Mammary epithelial cell (primary cell): ENCODE measurements at regions of chr16 and their contacts with region 1.

Region 1: GRCh38 chr16:11328172-11329070 is 16.8 kb upstream of the RMI2 start:
- DNase-seq: peak; percentile 74
- H3K4me3 ChIP-seq: no peak overlapping the region
- H3K27ac ChIP-seq: no peak overlapping the region
- H3K4me1 ChIP-seq: peaks cover 11% of the 10 kb centered on the region
- H3K27me3 ChIP-seq: no peaks in the 10 kb centered on the region
- CTCF ChIP-seq: no peak

Region 2: GRCh38 chr16:11296706-11297491 is 31.5 kb before region 1 on chr16:
- CTCF ChIA-PET with region 1: no interaction called
- dilution Hi-C with region 1: no loop called
- in situ Hi-C with region 1: no loop called
- intact Hi-C with region 1: no loop called
- DNase-seq: peak; percentile 50
- H3K4me3 ChIP-seq: no peak overlapping the region
- H3K27ac ChIP-seq: no peak overlapping the region
- H3K4me1 ChIP-seq: peaks cover 13% of the 10 kb centered on the region
- H3K27me3 ChIP-seq: no peaks in the 10 kb centered on the region
- CTCF ChIP-seq: no peak

Region 3: GRCh38 chr16:11345040-11345862 is 16.8 kb after region 1 on chr16 and contains the start of gene RMI2:
- CTCF ChIA-PET with region 1: no interaction called
- dilution Hi-C with region 1: no loop called
- in situ Hi-C with region 1: no loop called
- intact Hi-C with region 1: loop called (anchors 1 kb)
- DNase-seq: peak; percentile 93
- H3K4me3 ChIP-seq: peak within 1 kb of the TSS; percentile 63 to 73 (median 67)
- H3K27ac ChIP-seq: peak within 1 kb of the TSS; percentile 33
- H3K4me1 ChIP-seq: peaks cover 8% of the 10 kb centered on the region
- H3K27me3 ChIP-seq: no peaks in the 10 kb centered on the region
- CTCF ChIP-seq: no peak
- total RNA-seq, gene RMI2: 2.2 to 14.7 TPM

Region 4: GRCh38 chr16:11759163-11759834 is 430.9 kb after region 1 on chr16:
- CTCF ChIA-PET with region 1: no interaction called
- dilution Hi-C with region 1: no loop called
- in situ Hi-C with region 1: no loop called
- intact Hi-C with region 1: no loop called
- DNase-seq: no peak
- H3K4me3 ChIP-seq: no peak overlapping the region
- H3K27ac ChIP-seq: no peak overlapping the region
- H3K4me1 ChIP-seq: peaks cover 4% of the 10 kb centered on the region
- H3K27me3 ChIP-seq: no peaks in the 10 kb centered on the region
- CTCF ChIP-seq: no peak

Region 5: DNA sequence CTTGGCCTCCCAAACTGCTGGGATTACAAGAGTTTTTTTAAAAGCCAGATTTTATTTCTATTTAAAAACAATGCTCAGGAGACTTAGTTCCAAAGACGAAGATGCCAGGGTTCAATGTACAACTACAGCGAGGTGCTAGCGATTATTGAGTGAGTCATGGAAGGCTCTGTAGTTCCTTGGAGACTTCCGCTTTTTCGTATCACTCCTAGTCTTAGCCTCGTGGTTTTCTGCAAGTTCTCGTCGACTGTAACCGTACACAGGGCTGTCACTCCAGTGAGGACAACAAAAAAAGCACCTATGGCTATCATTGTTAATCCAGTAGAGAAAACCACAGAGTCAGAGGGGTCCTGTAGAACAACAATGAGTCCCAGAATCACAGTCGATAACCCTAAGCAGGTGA is 491.4 kb after region 1 on chr16:
- CTCF ChIA-PET with region 1: interaction called, 12 read pairs
- dilution Hi-C with region 1: no loop called
- in situ Hi-C with region 1: no loop called
- intact Hi-C with region 1: no loop called
- DNase-seq: no peak
- H3K4me3 ChIP-seq: no peak overlapping the region
- H3K27ac ChIP-seq: no peak overlapping the region
- H3K4me1 ChIP-seq: no peaks in the 10 kb centered on the region
- H3K27me3 ChIP-seq: no peaks in the 10 kb centered on the region
- CTCF ChIP-seq: no peak